ENCODE measurements at regions of chr9 and their contacts with region 1.

Region 1: GRCh38 chr9:77163884-77164283 is 13.4 kb upstream of the VPS13A start:
- DNase-seq: no peak
- H3K4me3 ChIP-seq: no peak overlapping the region
- H3K27ac ChIP-seq: no peak overlapping the region
- H3K4me1 ChIP-seq: no peaks in the 10 kb centered on the region
- CTCF ChIP-seq: no peak

Region 2: GRCh38 chr9:76311586-76311985 is 852.3 kb before region 1 on chr9:
- CTCF ChIA-PET with region 1: no interaction called
- POLR2A ChIA-PET with region 1: no interaction called
- intact Hi-C with region 1: no loop called
- DNase-seq: no peak
- H3K4me3 ChIP-seq: no peak overlapping the region
- H3K27ac ChIP-seq: no peak overlapping the region
- H3K4me1 ChIP-seq: no peaks in the 10 kb centered on the region
- CTCF ChIP-seq: no peak

Region 3: DNA sequence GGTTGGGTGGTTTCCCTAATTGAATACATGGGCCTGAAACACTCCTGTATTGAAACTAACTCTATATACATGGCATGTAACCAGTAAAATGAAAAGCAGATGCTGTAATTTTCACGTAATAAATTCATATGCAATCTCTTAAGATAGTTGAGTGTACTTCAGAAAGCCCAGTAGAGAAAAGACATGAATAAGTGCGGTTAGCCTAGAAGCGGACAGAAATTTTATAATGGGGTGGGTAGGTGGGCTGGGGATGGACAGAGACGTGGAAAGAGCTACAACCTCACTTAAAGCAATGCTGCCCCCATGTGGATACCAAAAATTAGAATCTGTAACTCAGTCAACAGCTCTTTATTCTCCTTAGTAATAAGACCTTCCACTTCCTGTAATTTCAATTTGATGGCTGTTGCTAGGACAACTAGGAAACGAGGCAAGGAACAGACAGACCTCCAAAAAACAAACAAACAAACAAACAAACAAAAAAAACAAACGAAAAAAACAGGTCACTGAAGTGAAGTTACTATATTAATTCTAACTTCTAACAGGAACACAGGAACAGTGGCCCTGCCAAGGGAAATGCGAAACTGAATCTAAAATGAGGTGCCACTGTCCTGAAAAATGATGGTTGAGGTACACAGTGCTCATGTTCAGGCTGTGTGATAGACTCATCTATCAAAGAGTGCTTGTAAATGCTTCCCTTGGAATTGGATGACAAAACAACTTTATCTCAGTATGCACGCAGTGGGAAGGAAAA is 587.6 kb after region 1 on chr9:
- CTCF ChIA-PET with region 1: no interaction called
- POLR2A ChIA-PET with region 1: no interaction called
- intact Hi-C with region 1: loop called (anchors 10 kb)
- DNase-seq: peak; percentile 33
- H3K4me3 ChIP-seq: no peak overlapping the region
- H3K27ac ChIP-seq: no peak overlapping the region
- H3K4me1 ChIP-seq: no peaks in the 10 kb centered on the region
- CTCF ChIP-seq: peak; percentile 75

Measured in OCI-LY7 (cell line).